AG04450 (cell line): ENCODE measurements at regions of chr12 and their contacts with region 1.

Region 1: DNA sequence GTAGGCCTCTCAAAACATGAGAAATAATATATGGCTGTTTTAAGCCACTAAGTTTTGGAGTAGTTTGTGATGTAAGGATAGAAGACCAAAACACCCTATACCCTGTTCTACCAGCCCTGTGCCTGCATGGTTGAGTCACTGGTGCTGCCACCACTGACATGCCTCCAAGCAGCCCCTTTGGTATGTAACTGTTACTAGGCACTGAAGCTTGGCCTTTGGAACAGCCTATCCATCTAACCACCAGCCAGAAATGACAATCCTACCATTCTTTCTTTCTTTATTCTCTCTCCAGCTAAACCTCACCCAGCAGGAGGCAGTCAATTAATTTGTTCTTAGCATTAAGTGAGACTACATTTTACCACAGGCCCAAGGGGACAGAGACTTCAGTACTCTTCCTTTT is 240.3 kb downstream of the MSRB3 start:
- DNase-seq: no peak
- H3K4me3 ChIP-seq: no peak overlapping the region
- H3K27ac ChIP-seq: no peak overlapping the region
- H3K27me3 ChIP-seq: no peaks in the 10 kb centered on the region
- CTCF ChIP-seq: no peak

Region 2: GRCh38 chr12:65845751-65846537 is 327.2 kb after region 1 on chr12:
- CTCF ChIA-PET with region 1: interaction called, 11 read pairs
- POLR2A ChIA-PET with region 1: no interaction called
- DNase-seq: no peak
- H3K4me3 ChIP-seq: no peak overlapping the region
- H3K27ac ChIP-seq: no peak overlapping the region
- H3K27me3 ChIP-seq: no peaks in the 10 kb centered on the region
- CTCF ChIP-seq: 0 out of 2 replicates have a peak, but pooled peaks have one; percentile 9